Left cardiac atrium (tissue), 4 donors: ENCODE measurements at regions of chr3 and their contacts with region 1.

Region 1: GRCh38 chr3:45499529-45499928 is 95.0 kb upstream of the LIMD1 start:
- DNase-seq: no peak
- ATAC-seq: no peak

Region 2: GRCh38 chr3:45043728-45044299 is 455.7 kb before region 1 on chr3:
- intact Hi-C with region 1: loop called (anchors 5 to 10 kb)
- DNase-seq: no peak
- ATAC-seq: peak in 1 of 2 donors; percentile 29

Region 3: DNA sequence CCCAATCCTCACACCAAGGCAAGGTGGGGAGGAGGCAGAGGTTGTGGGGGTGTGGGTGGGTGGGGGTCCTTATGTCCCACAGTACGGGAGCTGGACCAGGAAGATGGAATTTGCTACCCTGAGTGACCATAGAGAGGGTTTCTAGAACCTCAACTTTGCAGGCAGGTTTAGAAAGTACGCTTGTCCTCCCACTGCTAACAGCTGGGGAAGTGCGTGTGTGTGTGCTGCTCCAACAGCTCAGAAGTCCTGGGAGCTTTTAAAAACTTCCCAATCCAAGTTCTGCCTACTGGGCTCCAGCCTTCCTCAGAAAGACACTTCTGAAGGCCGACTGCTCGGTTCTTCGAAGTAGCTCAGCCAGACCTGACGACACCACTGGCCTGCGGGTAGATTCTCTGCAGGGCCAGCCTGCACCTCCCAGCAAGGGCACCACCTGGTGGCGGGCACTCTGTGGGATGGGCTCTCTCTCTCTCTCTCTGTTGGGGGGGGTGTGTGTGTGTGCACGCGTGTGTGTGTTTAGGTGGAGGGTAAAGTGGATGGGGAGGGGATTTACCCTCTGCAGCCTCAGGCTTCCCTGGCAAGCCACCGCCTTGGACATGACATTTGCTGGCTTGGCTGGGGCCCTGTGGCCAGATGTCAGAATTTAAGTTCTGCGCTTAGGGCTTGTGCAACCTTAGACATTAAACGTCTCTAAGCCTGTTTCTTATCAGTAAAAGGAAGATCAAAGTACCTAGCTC is 289.1 kb before region 1 on chr3:
- intact Hi-C with region 1: loop called in 1 of 2 experiments (anchors 10 kb)
- DNase-seq: peak; percentile 86
- ATAC-seq: peak; percentile 97 to 98

Region 4: DNA sequence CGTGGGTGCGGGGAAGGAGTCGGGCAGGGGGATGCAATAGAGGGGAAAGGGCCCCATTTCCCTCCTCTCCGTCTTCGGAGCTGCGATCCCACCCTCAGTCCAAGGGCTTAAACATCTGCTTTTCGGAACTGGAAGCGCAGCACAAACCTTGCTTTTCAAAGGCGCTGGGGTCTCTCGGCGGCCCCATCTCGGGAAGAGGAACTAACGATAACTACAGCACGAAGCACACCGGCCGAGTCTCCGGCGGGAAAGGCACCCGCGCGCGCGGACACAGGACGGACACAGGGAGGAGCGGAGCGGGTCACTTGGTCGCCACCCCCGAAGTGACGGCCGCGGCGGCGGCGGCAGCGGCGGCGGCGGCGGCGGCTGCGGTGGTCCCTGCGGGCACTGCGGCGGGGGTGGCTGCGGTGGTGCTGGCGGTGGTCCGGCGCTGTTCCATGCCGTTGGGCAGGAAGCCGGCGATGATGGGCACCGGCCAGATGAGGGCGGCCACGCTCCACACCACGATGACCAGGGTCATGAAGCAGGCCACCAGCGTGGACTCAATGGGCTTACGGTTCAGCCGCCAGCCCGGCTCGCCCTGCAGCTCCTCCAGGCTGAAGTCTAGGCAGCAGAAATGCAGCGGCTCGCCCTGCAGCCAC is 274.6 kb before region 1 on chr3:
- intact Hi-C with region 1: loop called in 1 of 2 experiments (anchors 5 kb)
- DNase-seq: peak; percentile 80
- ATAC-seq: peak; percentile 70 to 74

Region 5: GRCh38 chr3:45677033-45677433 is 177.5 kb after region 1 on chr3:
- intact Hi-C with region 1: no loop called
- DNase-seq: no peak
- ATAC-seq: peak in 1 of 2 donors; percentile 31

Region 6: DNA sequence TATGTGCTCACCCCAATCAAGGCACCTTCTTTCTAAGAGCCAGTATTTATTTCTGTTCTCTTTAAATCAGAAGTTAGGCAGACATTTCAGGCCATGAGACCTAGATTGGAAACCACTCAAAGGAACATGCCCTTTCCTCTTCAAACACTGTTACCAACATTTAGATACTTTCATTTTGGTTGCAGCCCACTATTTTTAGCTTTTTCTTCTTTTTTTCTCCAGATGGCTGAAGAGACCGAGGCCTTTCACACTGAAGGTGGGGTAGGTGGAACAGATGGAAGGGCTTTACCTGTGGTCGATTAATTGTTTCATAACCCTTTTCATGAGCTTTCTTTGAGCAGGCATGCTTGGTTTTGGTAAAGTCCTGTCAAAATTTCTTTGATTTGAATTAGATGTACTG is 353.3 kb after region 1 on chr3:
- intact Hi-C with region 1: no loop called
- DNase-seq: no peak
- ATAC-seq: no peak